ENCODE measurements at regions of chr6 and their contacts with region 1.

Region 1: DNA sequence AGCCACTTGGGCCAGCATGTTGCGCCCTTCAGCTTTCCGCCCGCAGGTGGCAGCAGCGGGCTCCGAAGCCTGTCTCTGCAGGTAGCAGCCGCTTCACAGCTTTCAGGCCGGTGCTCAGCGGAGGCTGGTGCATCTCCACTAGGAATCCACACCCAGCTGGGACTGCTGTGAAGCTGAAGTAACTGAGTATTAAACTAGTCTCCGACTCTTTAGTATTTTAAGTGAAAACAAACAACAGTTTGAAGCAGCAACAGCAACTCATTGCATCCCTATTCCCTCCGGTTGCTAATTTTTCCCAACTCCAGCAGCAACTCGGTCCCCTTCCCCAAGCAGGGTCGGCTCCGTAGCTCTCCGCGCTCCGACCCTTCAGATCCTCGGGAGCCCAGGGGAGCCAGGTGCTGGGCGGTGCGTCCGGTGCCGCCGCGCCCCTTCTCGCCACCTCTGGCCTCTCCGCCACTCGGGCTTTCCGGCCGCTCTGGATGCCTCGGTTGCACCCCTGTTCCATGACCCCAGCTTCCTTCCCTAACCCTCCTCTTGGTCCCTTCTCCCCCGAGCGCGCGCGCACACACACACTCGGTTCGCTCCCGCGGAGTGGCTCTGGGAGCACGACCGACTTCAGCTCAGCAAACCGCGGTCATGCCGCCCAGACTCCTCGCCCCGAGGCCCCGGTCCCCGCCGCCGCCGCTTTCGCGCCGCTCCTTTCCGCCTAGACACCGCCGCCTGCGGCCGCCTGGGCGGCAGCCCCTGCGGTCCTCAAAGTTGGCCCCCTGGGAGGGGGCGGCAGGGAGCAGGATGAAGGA is 768 bp upstream of the NKAIN2 start:
- DNase-seq: peak; percentile 22
- ATAC-seq: peak; percentile 99
- H3K4me3 ChIP-seq: no peak overlapping the region
- H3K27ac ChIP-seq: no peak overlapping the region
- H3K4me1 ChIP-seq: no peaks in the 10 kb centered on the region
- H3K27me3 ChIP-seq: peaks cover 25% of the 10 kb centered on the region; the same call in 1 of the 2 replicates
- CTCF ChIP-seq: peak; percentile 51 to 92 (median 88); a peak in 5 of 6 replicates
- POLR2A ChIP-seq: no peak
- RAD21 ChIP-seq: peak; percentile 73

Region 2: DNA sequence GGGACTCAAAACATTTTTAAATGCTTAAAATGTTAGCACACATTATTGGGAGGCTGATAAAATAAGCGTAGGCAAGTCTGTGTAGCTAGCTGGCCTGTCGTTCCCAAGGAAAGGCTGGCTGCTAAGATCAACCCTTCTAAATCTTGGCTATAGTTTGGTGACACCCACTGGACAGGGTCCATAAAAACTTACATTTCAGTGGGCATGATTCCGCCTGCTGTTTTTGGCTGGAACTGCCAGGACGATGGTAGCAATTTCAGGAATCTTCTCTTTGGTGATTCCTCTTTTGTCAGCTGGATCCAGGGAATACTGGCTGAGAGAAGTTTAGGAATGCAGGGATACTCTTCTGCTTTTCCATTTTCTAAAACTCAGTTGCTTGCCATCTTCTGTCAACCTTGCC is 163.0 kb after region 1 on chr6:
- CTCF ChIA-PET with region 1: interaction called, 8 read pairs
- POLR2A ChIA-PET with region 1: no interaction called
- RAD21 ChIA-PET with region 1: no interaction called
- intact Hi-C with region 1: loop called (anchors 1 kb)
- DNase-seq: no peak
- ATAC-seq: peak; percentile 47
- H3K4me3 ChIP-seq: no peak overlapping the region
- H3K27ac ChIP-seq: no peak overlapping the region
- H3K4me1 ChIP-seq: no peaks in the 10 kb centered on the region; a peak in 1 of 4 replicates
- H3K27me3 ChIP-seq: peaks cover 18% of the 10 kb centered on the region
- CTCF ChIP-seq: peak; percentile 32 to 56 (median 43); a peak in 5 of 6 replicates
- POLR2A ChIP-seq: no peak
- RAD21 ChIP-seq: peak; percentile 35; the same call in 1 of the 2 replicates

Region 3: GRCh38 chr6:124795643-124796463 is 993.0 kb after region 1 on chr6:
- CTCF ChIA-PET with region 1: interaction called, 7 read pairs
- POLR2A ChIA-PET with region 1: no interaction called
- RAD21 ChIA-PET with region 1: interaction called in 1 of 2 experiments, 4 read pairs
- intact Hi-C with region 1: loop called (anchors 1 kb)
- DNase-seq: no peak
- ATAC-seq: peak; percentile 78
- H3K4me3 ChIP-seq: no peak overlapping the region
- H3K27ac ChIP-seq: no peak overlapping the region
- H3K4me1 ChIP-seq: no peaks in the 10 kb centered on the region
- H3K27me3 ChIP-seq: peaks cover 72% of the 10 kb centered on the region
- CTCF ChIP-seq: peak; percentile 21 to 53 (median 51); a peak in 5 of 6 replicates
- POLR2A ChIP-seq: no peak
- RAD21 ChIP-seq: peak; percentile 58

Region 4: GRCh38 chr6:124854338-124854922 is 1051.5 kb after region 1 on chr6:
- CTCF ChIA-PET with region 1: interaction called, 9 read pairs
- POLR2A ChIA-PET with region 1: no interaction called
- RAD21 ChIA-PET with region 1: no interaction called
- intact Hi-C with region 1: loop called (anchors 5 kb)
- DNase-seq: no peak
- ATAC-seq: no peak
- H3K4me3 ChIP-seq: no peak overlapping the region
- H3K27ac ChIP-seq: no peak overlapping the region
- H3K4me1 ChIP-seq: no peaks in the 10 kb centered on the region
- H3K27me3 ChIP-seq: no peaks in the 10 kb centered on the region
- CTCF ChIP-seq: peak in 2 of 3 experiments; percentile 20 to 35; a peak in 2 of 6 replicates
- POLR2A ChIP-seq: no peak
- RAD21 ChIP-seq: peak; percentile 44

Measured in HCT116 (cell line).